ENCODE measurements at regions of chr12 and their contacts with region 1.

Region 1: GRCh38 chr12:24109381-24110039 is 160.0 kb upstream of the SOX5 start:
- DNase-seq: peak; percentile 32
- H3K4me3 ChIP-seq: no peak overlapping the region
- H3K27ac ChIP-seq: no peak overlapping the region
- H3K4me1 ChIP-seq: peaks cover 11% of the 10 kb centered on the region
- H3K27me3 ChIP-seq: no peaks in the 10 kb centered on the region
- CTCF ChIP-seq: peak; percentile 39 to 51
- POLR2A ChIP-seq: no peak

Region 2: DNA sequence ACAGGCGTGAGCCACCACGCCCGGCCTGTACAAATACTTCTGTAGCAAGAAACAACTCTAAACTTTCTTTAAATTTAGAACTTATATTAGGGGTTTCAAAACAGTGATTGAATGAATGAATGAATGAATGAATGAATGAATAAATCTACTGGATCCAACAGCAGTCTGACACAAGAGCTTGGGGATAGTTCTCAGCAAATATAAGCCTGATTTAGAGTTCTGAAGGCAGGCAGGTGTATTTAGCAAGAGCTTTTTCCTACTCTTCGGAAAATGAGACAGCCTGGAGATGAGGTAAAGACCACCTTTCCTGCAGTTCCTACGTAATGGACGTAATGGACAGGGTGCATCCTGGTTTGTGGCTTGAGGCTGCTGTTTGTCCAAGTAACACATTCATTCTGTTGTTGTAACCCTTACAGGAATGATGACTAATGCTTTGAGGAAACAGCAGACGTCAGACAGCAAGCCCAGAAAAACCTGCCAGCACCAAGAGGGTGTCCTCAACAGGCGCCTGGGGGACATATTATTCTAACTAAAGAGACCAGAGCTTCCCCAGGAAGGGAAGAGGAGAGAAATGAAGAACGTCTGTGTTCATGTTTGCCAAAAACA is 117.3 kb after region 1 on chr12:
- CTCF ChIA-PET with region 1: interaction called, 4 read pairs
- POLR2A ChIA-PET with region 1: no interaction called
- dilution Hi-C with region 1: no loop called
- intact Hi-C with region 1: loop called (anchors 5 kb)
- DNase-seq: peak; percentile 95
- H3K4me3 ChIP-seq: no peak overlapping the region
- H3K27ac ChIP-seq: peak overlapping the region; percentile 80
- H3K4me1 ChIP-seq: peaks cover 27% of the 10 kb centered on the region
- H3K27me3 ChIP-seq: no peaks in the 10 kb centered on the region
- CTCF ChIP-seq: no peak
- POLR2A ChIP-seq: no peak

Region 3: DNA sequence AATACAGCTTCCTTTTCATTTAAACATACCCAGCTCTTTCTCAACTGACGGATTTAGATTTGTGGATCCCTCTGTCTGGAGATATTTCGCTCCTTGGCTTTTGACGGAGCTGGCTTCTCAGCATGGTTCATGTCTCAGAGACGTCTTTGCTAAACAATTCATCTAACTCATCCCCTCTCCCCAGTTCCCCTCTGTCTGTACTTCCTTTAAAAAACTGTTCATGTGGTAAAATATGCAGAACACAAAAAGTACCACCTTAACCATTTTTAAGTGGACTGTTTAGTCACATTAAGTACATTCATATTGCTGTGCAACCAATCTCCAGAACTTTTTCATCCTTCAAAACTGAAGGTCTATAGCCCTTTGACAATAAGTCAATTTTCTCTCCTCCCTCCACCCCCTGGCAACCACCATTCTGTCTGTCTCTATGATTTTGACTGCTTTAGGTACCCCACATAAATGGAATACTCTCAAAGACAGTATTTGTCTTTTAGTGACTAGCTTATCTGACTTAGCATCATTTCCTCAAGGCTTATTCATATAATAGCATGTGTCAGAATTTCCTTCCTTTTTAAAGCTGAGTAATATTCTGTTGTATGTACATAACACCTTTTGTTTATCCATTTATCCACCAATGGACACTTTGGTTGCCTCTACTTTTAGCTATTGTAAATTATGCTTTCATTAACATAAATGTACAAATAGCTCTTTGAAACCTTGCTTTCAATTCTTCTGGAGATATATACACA is 239.7 kb after region 1 on chr12:
- CTCF ChIA-PET with region 1: interaction called, 4 read pairs
- POLR2A ChIA-PET with region 1: no interaction called
- dilution Hi-C with region 1: no loop called
- intact Hi-C with region 1: loop called (anchors 5 kb)
- DNase-seq: peak; percentile 73
- H3K4me3 ChIP-seq: no peak overlapping the region
- H3K27ac ChIP-seq: peak overlapping the region; percentile 84
- H3K4me1 ChIP-seq: peaks cover 12% of the 10 kb centered on the region
- H3K27me3 ChIP-seq: no peaks in the 10 kb centered on the region
- CTCF ChIP-seq: no peak
- POLR2A ChIP-seq: no peak

Region 4: GRCh38 chr12:24728366-24728765 is 618.9 kb after region 1 on chr12:
- CTCF ChIA-PET with region 1: interaction called, 14 read pairs
- POLR2A ChIA-PET with region 1: no interaction called
- dilution Hi-C with region 1: no loop called
- intact Hi-C with region 1: loop called (anchors 2 kb)
- DNase-seq: peak; percentile 31
- H3K4me3 ChIP-seq: no peak overlapping the region
- H3K27ac ChIP-seq: no peak overlapping the region
- H3K4me1 ChIP-seq: no peaks in the 10 kb centered on the region
- H3K27me3 ChIP-seq: peaks cover 2 to 3% of the 10 kb centered on the region in 2 experiments
- CTCF ChIP-seq: peak; percentile 10 to 48
- POLR2A ChIP-seq: no peak

Region 5: DNA sequence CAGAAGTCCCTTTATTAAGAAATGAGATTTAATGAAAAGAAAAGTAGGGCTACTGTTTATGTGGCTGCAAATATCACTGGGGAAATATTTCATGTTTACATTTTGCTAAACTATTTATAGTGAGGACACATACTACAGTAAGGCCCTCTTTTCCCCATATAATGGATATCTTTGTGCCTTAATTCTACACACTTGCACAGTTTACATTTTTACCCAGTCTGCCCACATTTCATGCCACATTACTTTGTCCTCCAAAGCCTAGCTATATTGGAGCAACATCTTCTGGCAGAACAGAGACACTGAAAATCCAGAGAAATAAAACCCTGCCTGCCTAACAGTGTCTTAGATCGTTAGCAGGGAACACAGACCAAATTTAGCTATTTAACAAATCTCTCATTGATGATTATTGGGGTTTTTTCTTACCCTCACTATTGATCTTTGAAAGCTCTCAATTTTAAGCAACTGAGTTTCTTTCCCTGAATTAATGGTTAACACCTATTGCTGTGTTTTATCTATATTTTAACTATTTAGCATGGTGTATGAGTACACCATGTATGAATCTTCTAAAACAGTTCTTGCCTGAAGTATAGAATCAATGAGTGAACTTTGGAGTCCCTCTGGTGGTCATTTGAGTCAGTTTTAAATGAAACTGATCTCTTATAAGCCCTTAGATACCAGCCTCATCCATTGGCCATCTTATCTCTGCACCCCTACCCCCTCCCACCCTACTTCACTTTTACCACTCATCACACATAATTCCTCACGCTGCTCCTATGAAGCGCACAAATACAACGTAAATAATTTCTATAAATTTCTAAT is 669.2 kb after region 1 on chr12:
- CTCF ChIA-PET with region 1: interaction called, 8 read pairs
- POLR2A ChIA-PET with region 1: no interaction called
- dilution Hi-C with region 1: no loop called
- intact Hi-C with region 1: loop called (anchors 2 kb)
- DNase-seq: peak; percentile 39
- H3K4me3 ChIP-seq: no peak overlapping the region
- H3K27ac ChIP-seq: no peak overlapping the region
- H3K4me1 ChIP-seq: no peaks in the 10 kb centered on the region
- H3K27me3 ChIP-seq: peaks cover 0 to 4% of the 10 kb centered on the region in 2 experiments
- CTCF ChIP-seq: peak; percentile 17 to 26
- POLR2A ChIP-seq: no peak

Measured in endothelial cell of umbilical vein (primary cell).